PC-9 (cell line): ENCODE measurements at regions of chr15 and their contacts with region 1.

Region 1: DNA sequence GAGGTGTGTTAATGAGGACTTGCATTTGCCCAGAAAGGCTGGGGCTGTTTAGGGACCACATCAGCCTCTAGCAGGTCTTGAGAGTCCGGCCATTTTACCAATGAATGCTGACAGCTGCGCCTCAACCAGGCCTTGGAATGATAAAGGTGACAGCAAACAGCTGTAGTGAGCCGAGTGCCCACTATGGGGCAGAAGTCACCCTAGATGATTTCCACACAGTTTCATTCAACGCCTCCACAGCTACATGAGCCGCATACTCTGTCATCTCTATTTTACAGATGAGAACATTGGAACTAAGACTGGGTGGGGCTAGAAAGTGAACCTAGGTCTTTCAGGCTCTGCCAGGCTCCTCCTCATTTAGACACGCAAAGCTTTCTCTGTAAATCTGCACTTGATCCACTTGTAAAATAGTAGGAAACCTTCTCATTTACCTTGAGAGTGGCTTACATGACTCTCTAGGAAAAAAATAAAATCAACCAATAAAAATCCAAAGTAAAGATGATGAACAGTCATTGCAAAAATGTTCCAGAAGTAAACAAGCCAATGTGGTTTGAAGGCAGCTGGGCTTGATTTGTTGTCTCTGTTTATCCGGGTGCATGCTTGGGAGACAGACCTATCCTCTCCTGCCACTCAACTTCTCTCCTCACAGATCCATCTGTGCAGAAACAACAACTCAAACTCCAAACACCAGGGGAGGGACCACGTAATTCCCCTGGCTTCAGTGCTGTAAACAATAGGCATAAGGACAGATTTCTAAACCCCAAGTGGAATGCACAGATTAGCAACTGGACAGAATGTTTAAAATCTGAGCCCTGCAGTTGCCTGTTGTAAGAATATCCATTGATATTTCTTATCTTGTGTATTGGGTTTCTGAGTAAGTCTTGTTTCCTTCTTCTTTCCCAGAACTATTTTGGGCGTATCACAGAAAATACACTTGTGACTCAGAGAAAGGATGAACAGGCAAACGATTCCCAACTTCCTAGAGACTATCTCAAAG is 31.5 kb upstream of the LDHAL6B start:
- DNase-seq: peak; percentile 24 to 40
- H3K4me3 ChIP-seq: no peak overlapping the region
- H3K27ac ChIP-seq: peak overlapping the region; percentile 70
- H3K4me1 ChIP-seq: peaks cover 20% of the 10 kb centered on the region
- H3K27me3 ChIP-seq: no peaks in the 10 kb centered on the region
- CTCF ChIP-seq: peak; percentile 55

Region 2: GRCh38 chr15:59051873-59052861 is 123.0 kb before region 1 on chr15:
- CTCF ChIA-PET with region 1: no interaction called
- POLR2A ChIA-PET with region 1: no interaction called
- intact Hi-C with region 1: no loop called
- DNase-seq: no peak
- H3K4me3 ChIP-seq: no peak overlapping the region
- H3K27ac ChIP-seq: no peak overlapping the region
- H3K4me1 ChIP-seq: no peaks in the 10 kb centered on the region
- H3K27me3 ChIP-seq: no peaks in the 10 kb centered on the region
- CTCF ChIP-seq: no peak

Region 3: GRCh38 chr15:59116771-59117170 is 58.4 kb before region 1 on chr15:
- CTCF ChIA-PET with region 1: no interaction called
- POLR2A ChIA-PET with region 1: interaction called, 12 read pairs
- intact Hi-C with region 1: no loop called
- DNase-seq: no peak
- H3K4me3 ChIP-seq: no peak overlapping the region
- H3K27ac ChIP-seq: no peak overlapping the region
- H3K4me1 ChIP-seq: no peaks in the 10 kb centered on the region
- H3K27me3 ChIP-seq: no peaks in the 10 kb centered on the region
- CTCF ChIP-seq: no peak

Region 4: GRCh38 chr15:59160880-59161593 is 14.1 kb before region 1 on chr15:
- CTCF ChIA-PET with region 1: no interaction called
- POLR2A ChIA-PET with region 1: interaction called, 10 read pairs
- intact Hi-C with region 1: no loop called
- DNase-seq: peak in 1 of 2 experiments; percentile 29
- H3K4me3 ChIP-seq: no peak overlapping the region
- H3K27ac ChIP-seq: no peak overlapping the region
- H3K4me1 ChIP-seq: no peaks in the 10 kb centered on the region
- H3K27me3 ChIP-seq: no peaks in the 10 kb centered on the region
- CTCF ChIP-seq: peak; percentile 41

Region 5: GRCh38 chr15:59191855-59192237 is 16.7 kb after region 1 on chr15:
- CTCF ChIA-PET with region 1: no interaction called
- POLR2A ChIA-PET with region 1: no interaction called
- intact Hi-C with region 1: loop called (anchors 1 kb)
- DNase-seq: peak; percentile 65 to 97
- H3K4me3 ChIP-seq: peak overlapping the region; percentile 45; the same call in 1 of the 2 replicates
- H3K27ac ChIP-seq: peak overlapping the region; percentile 99
- H3K4me1 ChIP-seq: peaks cover 32% of the 10 kb centered on the region
- H3K27me3 ChIP-seq: no peaks in the 10 kb centered on the region
- CTCF ChIP-seq: no peak

Region 6: GRCh38 chr15:59372352-59373211 is 197.4 kb after region 1 on chr15 and contains the start of gene MYO1E:
- CTCF ChIA-PET with region 1: no interaction called
- POLR2A ChIA-PET with region 1: interaction called, 6 read pairs
- intact Hi-C with region 1: loop called (anchors 2 kb)
- DNase-seq: peak; percentile 91
- H3K4me3 ChIP-seq: peak within 1 kb of the TSS; percentile 97
- H3K27ac ChIP-seq: peak within 1 kb of the TSS; percentile 89
- H3K4me1 ChIP-seq: peaks cover 30% of the 10 kb centered on the region
- H3K27me3 ChIP-seq: no peaks in the 10 kb centered on the region
- CTCF ChIP-seq: no peak
- total RNA-seq, gene MYO1E: 156 and 213 TPM in 2 replicates

Region 7: DNA sequence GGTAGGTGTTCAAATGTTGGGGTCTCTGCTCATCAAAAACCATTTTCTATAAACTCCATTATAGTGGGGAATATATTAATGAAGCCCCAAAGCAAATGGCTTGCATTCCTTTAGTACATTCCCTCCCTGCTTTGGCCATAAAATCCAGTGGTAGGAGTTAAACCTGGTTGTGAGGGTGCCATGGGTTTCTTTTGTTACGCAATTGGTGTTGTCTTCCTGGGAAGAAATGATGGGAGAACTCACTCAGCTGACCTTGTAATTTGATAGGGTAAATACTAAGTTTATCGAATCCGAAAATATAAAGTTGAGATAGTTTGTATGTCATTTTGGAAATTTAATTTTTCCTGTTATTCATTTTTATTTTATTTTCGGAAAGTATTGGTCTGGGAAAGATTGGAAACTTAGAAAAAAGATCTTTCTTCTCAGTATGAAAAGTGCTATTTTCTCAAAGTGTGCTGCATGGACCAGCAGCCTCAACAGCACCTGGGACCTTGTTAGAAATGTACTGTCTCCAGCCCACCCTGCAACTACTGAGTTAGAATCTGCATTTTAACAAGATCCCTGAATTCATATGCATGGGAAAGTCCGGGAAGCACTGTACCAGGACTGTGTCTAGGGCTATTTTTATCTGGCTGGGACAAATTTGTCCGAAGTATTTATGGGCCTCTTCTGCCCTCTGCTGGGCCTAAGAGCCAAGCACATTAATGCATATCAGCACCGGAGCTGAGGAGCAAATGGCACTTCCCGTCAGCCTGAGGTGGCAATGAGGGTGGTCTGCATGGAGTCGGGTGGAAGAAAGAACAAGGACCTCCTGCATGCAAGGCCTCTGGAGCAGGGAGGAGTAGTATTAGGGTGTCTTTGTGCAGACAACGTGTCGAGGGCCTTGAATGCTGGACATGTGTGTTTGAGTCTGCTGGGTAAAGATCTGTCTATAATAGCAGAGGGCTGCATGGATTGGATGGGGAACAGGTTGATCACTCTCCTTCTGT is 317.6 kb after region 1 on chr15:
- CTCF ChIA-PET with region 1: no interaction called
- POLR2A ChIA-PET with region 1: no interaction called
- intact Hi-C with region 1: loop called (anchors 1 kb)
- DNase-seq: peak in 1 of 2 experiments; percentile 54
- H3K4me3 ChIP-seq: no peak overlapping the region
- H3K27ac ChIP-seq: no peak overlapping the region
- H3K4me1 ChIP-seq: 0 out of 2 replicates have a peak, but pooled peaks cover 4% of the 10 kb centered on the region
- H3K27me3 ChIP-seq: no peaks in the 10 kb centered on the region
- CTCF ChIP-seq: peak; percentile 84